Heart right ventricle (tissue), 16 donors: ENCODE measurements at regions of chr4 and their contacts with region 1.

Region 1: GRCh38 chr4:173420324-173420752 is 21.4 kb upstream of the SCRG1 start:
- DNase-seq: no peak
- ATAC-seq: peak in 3 of 8 donors; percentile 21 to 56 (median 50)
- H3K4me3 ChIP-seq: peak overlapping the region in 1 of 10 donors; percentile 21
- H3K27ac ChIP-seq: no peak overlapping the region
- H3K4me1 ChIP-seq: peaks cover 0 to 42% (median 0%) of the 10 kb centered on the region in 9 donors
- H3K27me3 ChIP-seq: no peaks in the 10 kb centered on the region
- CTCF ChIP-seq: peak in 8 of 9 donors; percentile 42 to 69 (median 60)

Region 2: GRCh38 chr4:173025131-173025530 is 395.2 kb before region 1 on chr4:
- intact Hi-C with region 1: loop called in 1 of 10 experiments (anchors 10 kb)
- DNase-seq: peak in 1 of 2 donors; percentile 72
- ATAC-seq: peak in 7 of 8 donors; percentile 69 to 84 (median 80)
- H3K4me3 ChIP-seq: no peak overlapping the region
- H3K27ac ChIP-seq: no peak overlapping the region
- H3K4me1 ChIP-seq: peaks cover 0 to 8% (median 0%) of the 10 kb centered on the region in 9 donors
- H3K27me3 ChIP-seq: no peaks in the 10 kb centered on the region
- CTCF ChIP-seq: peak; percentile 38 to 77 (median 71)

Region 3: DNA sequence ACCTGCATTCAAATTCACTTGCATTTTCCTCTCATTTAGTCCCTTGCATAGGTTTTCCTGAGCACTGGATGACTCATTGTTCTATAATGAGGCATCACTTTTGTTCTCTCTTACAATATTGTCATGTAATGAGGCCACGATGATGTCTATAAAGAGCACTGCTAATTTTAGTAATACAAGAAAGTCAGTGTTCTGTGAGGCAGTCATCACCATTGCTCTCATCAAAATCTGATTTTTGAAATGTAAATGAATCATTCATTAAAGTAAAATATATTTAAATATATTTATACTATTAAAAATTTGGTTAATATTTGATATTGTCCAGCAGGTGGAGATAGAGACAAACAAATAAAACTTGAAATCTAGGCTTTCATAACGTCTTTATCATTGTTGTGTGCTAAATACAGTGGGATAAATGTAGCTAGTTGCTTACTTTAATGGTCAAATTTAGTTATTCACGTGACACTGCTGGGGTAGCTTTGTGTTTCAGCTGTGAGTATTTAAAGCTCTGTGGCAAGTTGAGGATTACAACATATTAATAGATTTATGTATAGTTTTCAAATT is 101.6 kb before region 1 on chr4:
- intact Hi-C with region 1: loop called in 9 of 10 experiments (anchors 1 to 5 kb)
- DNase-seq: no peak
- ATAC-seq: peak; percentile 28 to 83 (median 70)
- H3K4me3 ChIP-seq: no peak overlapping the region
- H3K27ac ChIP-seq: peak overlapping the region in 2 of 10 donors; percentile 47 to 67
- H3K4me1 ChIP-seq: peaks cover 0 to 18% (median 10%) of the 10 kb centered on the region in 9 donors
- H3K27me3 ChIP-seq: no peaks in the 10 kb centered on the region
- CTCF ChIP-seq: peak; percentile 20 to 73 (median 52)

Region 4: GRCh38 chr4:173494013-173494970 is 74.0 kb after region 1 on chr4:
- intact Hi-C with region 1: loop called (anchors 1 to 5 kb)
- DNase-seq: peak; percentile 29 to 60
- ATAC-seq: peak; percentile 85 to 95 (median 91)
- H3K4me3 ChIP-seq: peak overlapping the region in 9 of 10 donors; percentile 19 to 54 (median 48)
- H3K27ac ChIP-seq: peak overlapping the region in 1 of 10 donors; percentile 27
- H3K4me1 ChIP-seq: peaks cover 0 to 38% (median 9%) of the 10 kb centered on the region in 9 donors
- H3K27me3 ChIP-seq: peaks cover 0 to 24% (median 0%) of the 10 kb centered on the region in 7 donors
- CTCF ChIP-seq: peak; percentile 49 to 86 (median 77)

Region 5: DNA sequence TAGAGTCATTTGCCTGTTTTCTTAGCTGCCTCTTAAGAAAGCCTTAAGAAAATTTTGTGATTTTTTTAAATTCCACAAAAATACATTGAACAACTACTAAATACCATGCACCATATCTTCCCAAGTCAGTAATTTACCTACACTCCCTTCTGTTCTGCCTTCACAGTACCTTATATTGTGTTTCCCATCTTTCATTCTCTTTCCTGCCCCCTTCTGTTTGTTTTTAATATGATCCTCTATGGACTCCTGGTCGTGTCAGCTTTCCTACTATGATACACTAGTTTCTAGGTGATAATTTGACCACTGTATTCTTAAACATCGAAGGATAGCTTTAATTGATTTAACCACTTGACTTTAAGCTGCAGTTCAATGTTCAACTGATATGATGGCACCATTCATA is 407.4 kb after region 1 on chr4:
- intact Hi-C with region 1: loop called in 1 of 10 experiments (anchors 10 kb)
- DNase-seq: no peak
- ATAC-seq: peak in 1 of 8 donors; percentile 41
- H3K4me3 ChIP-seq: no peak overlapping the region
- H3K27ac ChIP-seq: no peak overlapping the region
- H3K4me1 ChIP-seq: no peaks in the 10 kb centered on the region
- H3K27me3 ChIP-seq: no peaks in the 10 kb centered on the region
- CTCF ChIP-seq: peak in 3 of 9 donors; percentile 7 to 36 (median 23)